ENCODE measurements at regions of chr10 and their contacts with region 1.

Region 1: DNA sequence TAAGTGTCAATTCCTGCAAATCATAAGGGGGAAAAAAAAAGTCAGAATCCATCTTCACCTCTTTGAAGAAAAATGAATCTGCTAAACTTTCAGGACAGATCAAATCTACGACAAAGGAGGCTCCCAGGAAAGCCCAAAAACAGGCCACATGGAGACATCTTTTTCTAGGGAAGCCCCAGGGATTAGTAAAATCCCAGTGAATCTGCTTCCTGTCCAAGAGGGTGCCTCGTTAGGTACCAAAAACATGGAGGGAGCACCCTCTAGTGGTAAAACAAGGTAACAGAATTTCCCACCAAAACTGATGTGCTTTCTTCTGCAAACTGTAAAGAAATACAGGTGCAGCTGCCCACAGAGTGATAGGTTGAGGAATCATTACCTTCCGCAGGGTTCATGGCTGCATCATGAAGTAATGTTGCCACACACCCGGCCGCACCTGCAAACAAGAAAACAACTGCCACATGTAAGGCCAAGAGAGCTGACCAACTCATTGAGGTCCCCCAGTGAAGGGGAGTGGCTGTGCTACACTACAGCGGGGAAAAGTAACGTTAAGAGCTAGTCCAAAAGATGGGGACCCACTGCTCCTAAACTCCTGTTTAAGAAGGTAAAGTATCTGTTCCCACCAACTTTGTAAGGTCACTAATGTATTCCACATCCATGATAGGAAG is 7.9 kb downstream of the SLC25A28 start:
- DNase-seq: peak in 4 of 5 donors; percentile 5 to 49 (median 38)
- H3K4me3 ChIP-seq: no peak overlapping the region
- H3K4me3 Mint-ChIP-seq: peak overlapping the region in 1 of 7 donors; percentile 25
- H3K27ac ChIP-seq: no peak overlapping the region
- H3K27ac Mint-ChIP-seq: peak overlapping the region; percentile 22 to 91 (median 58)
- H3K4me1 ChIP-seq: peaks cover 4% of the 10 kb centered on the region
- H3K4me1 Mint-ChIP-seq: peaks cover 28 to 40% (median 28%) of the 10 kb centered on the region in 3 donors
- H3K27me3 ChIP-seq: no peaks in the 10 kb centered on the region
- H3K27me3 Mint-ChIP-seq: no peaks in the 10 kb centered on the region

Region 2: DNA sequence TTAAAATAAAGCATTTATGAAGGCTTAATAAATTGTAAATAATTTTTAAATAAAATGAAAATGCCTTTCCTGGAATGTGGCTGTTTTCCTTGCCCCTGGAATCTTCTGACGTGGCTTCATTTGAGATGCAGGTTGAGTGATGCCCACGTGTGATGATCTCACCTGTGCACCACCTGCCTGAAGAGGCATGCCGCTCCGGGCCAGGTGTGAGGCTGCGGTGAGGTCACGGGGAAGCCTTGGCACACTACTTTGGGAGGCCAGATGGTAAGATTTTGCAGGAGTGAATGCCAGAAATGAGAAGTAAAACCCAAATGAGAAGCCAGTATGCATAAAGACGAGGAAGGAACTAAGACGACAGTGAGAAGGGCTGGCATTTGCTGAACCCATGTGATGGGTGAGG is 218.0 kb before region 1 on chr10:
- CTCF ChIA-PET with region 1: interaction called, 12 read pairs
- POLR2A ChIA-PET with region 1: no interaction called
- DNase-seq: no peak
- H3K4me3 ChIP-seq: no peak overlapping the region
- H3K4me3 Mint-ChIP-seq: no peak overlapping the region
- H3K27ac ChIP-seq: no peak overlapping the region
- H3K27ac Mint-ChIP-seq: peak overlapping the region in 1 of 8 donors; percentile 50
- H3K4me1 ChIP-seq: peaks cover 4% of the 10 kb centered on the region
- H3K4me1 Mint-ChIP-seq: peaks cover 0 to 3% (median 2%) of the 10 kb centered on the region in 3 donors
- H3K27me3 ChIP-seq: no peaks in the 10 kb centered on the region
- H3K27me3 Mint-ChIP-seq: no peaks in the 10 kb centered on the region

Region 3: DNA sequence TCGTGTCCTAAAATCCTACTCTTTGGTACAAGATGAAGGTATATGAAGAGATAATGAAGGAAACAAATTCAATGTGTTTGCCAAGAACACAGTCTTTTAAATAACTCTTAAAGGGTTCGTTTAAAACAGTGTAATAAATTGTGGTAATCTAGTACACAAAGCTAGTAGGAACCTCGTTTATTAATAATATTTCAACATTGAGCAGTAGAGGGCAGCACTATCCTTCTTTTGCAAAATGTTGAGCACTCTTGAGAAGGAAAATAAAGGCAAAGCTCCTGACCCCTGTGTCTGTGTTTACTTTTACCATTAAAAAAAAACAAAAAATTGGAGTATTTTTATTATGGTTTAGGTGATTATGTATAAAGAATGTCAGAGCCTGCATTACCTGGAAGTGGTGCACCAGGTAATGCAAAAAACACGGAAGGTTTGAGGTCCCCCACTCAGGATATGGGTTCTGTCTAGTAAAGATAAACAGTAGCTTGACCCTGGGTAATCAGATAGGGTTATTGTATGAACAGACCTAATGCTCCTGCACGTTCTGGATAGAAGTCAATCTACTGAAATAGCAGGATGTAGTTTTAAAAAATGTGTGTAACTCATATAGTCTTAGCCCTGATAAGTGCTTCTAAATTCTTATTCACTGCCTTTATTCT is 176.2 kb before region 1 on chr10:
- CTCF ChIA-PET with region 1: interaction called, 10 read pairs
- POLR2A ChIA-PET with region 1: interaction called, 3 read pairs
- DNase-seq: peak in 2 of 5 donors; percentile 7 to 19
- H3K4me3 ChIP-seq: no peak overlapping the region
- H3K4me3 Mint-ChIP-seq: peak overlapping the region in 1 of 7 donors; percentile 62
- H3K27ac ChIP-seq: no peak overlapping the region
- H3K27ac Mint-ChIP-seq: no peak overlapping the region
- H3K4me1 ChIP-seq: peaks cover 11% of the 10 kb centered on the region
- H3K4me1 Mint-ChIP-seq: peaks cover 22 to 31% (median 27%) of the 10 kb centered on the region in 3 donors
- H3K27me3 ChIP-seq: no peaks in the 10 kb centered on the region
- H3K27me3 Mint-ChIP-seq: peaks cover 0 to 4% of the 10 kb centered on the region in 2 donors

Region 4: DNA sequence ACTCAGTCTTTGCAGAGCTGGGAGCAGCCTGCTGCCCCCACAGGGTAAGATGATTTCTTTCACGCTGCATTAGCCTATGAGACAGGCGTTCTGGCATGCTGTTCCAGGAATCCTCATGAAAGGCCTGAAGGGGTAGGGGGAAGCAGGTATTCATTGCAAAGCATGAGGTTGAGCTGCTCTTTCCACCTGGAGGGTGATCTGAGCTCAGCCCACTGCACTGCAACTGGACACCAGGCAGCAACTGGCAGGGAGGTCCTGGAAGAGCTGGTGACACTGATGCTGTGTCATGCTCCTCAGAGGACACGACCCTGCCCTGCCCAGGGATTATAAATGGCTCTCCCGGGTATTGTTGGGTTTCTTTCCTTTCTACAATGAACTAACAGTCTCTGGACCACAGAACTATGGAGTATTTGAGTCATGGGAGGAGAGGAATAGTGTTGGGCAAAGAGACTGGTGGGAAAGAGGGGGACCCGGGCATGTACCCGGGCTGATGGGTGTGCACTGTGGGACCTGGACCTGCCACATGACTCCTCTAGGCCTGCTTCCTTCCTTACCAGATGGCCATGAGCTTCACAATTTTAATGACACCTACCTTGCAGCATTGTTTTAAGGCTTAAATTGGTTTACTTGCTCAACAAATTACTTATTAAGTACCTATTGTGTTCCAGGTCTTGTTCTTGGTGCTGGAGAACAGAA is 16.4 kb before region 1 on chr10:
- CTCF ChIA-PET with region 1: interaction called, 10 read pairs
- POLR2A ChIA-PET with region 1: no interaction called
- DNase-seq: no peak
- H3K4me3 ChIP-seq: no peak overlapping the region
- H3K4me3 Mint-ChIP-seq: no peak overlapping the region
- H3K27ac ChIP-seq: no peak overlapping the region
- H3K27ac Mint-ChIP-seq: no peak overlapping the region
- H3K4me1 ChIP-seq: no peaks in the 10 kb centered on the region
- H3K4me1 Mint-ChIP-seq: no peaks in the 10 kb centered on the region
- H3K27me3 ChIP-seq: no peaks in the 10 kb centered on the region
- H3K27me3 Mint-ChIP-seq: peaks cover 6 to 12% of the 10 kb centered on the region in 2 donors

Region 5: DNA sequence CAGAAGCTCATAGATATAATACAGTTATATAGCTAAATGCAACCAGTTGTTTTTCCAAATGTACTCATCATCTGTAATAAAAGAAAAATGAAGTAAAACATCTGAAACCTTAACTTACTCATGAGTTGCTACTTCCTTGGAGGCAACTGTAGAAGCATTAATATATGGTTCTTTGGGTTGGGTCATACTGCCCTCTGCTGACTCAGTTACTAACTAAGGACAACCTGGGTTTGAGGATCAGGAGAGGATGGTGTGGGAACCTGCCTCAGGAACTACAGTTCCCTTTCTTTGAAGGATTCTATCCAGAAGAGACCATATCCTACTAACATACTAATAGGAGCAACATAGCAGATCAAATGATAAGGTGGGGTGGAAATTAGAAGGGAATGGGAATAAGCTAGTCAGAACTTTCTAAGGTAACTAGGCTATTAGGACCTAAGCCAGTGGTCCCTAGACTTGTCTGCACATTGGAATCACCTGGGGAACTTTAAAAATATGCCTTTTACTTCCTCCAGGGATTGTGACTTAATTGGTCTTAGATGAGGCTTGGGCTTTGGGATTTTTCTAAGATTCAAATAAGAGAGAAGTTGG is 98.9 kb after region 1 on chr10:
- CTCF ChIA-PET with region 1: no interaction called
- POLR2A ChIA-PET with region 1: no interaction called
- DNase-seq: peak in 2 of 5 donors; percentile 7 to 23
- H3K4me3 ChIP-seq: no peak overlapping the region
- H3K4me3 Mint-ChIP-seq: no peak overlapping the region
- H3K27ac ChIP-seq: no peak overlapping the region
- H3K27ac Mint-ChIP-seq: peak overlapping the region in 2 of 8 donors; percentile 8 to 80
- H3K4me1 ChIP-seq: no peaks in the 10 kb centered on the region
- H3K4me1 Mint-ChIP-seq: no peaks in the 10 kb centered on the region
- H3K27me3 ChIP-seq: no peaks in the 10 kb centered on the region
- H3K27me3 Mint-ChIP-seq: no peaks in the 10 kb centered on the region